Caco-2 (cell line): ENCODE measurements at regions of chr16 and their contacts with region 1.

Region 1: GRCh38 chr16:52634104-52634503 is 87.2 kb upstream of the TOX3 start:
- DNase-seq: no peak
- H3K4me3 ChIP-seq: no peak overlapping the region
- H3K4me3 Mint-ChIP-seq: no peak overlapping the region
- H3K27ac Mint-ChIP-seq: no peak overlapping the region
- H3K4me1 ChIP-seq: no peaks in the 10 kb centered on the region
- H3K4me1 Mint-ChIP-seq: no peaks in the 10 kb centered on the region
- H3K27me3 ChIP-seq: no peaks in the 10 kb centered on the region
- H3K27me3 Mint-ChIP-seq: no peaks in the 10 kb centered on the region
- CTCF ChIP-seq: no peak

Region 2: GRCh38 chr16:52657924-52658323 is 23.8 kb after region 1 on chr16:
- CTCF ChIA-PET with region 1: no interaction called
- POLR2A ChIA-PET with region 1: interaction called, 13 read pairs
- intact Hi-C with region 1: no loop called
- DNase-seq: no peak
- H3K4me3 ChIP-seq: no peak overlapping the region
- H3K4me3 Mint-ChIP-seq: no peak overlapping the region
- H3K27ac Mint-ChIP-seq: no peak overlapping the region
- H3K4me1 ChIP-seq: no peaks in the 10 kb centered on the region
- H3K4me1 Mint-ChIP-seq: no peaks in the 10 kb centered on the region
- H3K27me3 ChIP-seq: no peaks in the 10 kb centered on the region
- H3K27me3 Mint-ChIP-seq: peaks cover under 1% of the 10 kb centered on the region
- CTCF ChIP-seq: no peak